Activated CD8-positive, alpha-beta T cell treated with anti-CD3 and anti-CD28 coated beads for 36 hours (primary cell): ENCODE measurements at regions of chr17 and their contacts with region 1.

Region 1: GRCh38 chr17:42843358-42843934 is 934 bp upstream of the AOC2 start:
- DNase-seq: no peak
- ATAC-seq: peak; percentile 29
- H3K4me3 Mint-ChIP-seq: no peak overlapping the region
- H3K27ac Mint-ChIP-seq: no peak overlapping the region
- H3K4me1 Mint-ChIP-seq: peaks cover 21% of the 10 kb centered on the region
- H3K27me3 Mint-ChIP-seq: no peaks in the 10 kb centered on the region
- CTCF ChIP-seq: no peak

Region 2: DNA sequence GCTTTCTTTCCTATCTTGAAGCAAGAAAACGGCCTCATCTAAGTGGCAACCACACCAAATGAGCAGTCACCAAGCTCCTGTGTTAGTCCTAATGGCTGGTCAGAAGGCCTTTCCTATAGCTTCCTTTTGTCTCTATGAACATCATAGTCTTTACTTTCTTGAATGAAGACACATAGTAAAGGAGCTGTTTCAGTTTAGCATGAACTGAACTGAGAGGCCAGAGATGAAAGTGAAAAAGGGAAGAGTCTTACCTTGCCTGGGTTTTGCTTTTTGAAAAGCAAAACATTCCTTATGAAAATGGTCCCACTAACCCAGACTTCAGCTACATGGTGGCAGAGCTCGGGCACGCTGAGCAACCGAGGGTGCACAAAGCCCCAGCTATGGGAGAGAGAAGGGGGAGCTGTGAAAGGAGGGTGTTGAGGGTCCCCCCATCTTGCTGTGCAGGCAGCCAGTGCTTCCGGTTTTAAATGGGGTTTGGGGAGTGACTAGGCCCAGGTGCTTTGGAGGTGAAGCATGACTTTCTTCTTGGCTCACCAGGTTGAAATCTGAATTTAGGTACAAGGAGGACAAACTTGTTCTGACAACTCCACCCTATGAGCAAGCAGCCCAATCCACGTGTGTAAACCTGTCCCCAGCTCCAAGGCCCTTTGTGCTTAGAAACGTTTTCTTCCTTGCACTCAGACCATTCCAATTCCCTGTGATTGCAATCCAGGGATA is 256.8 kb before region 1 on chr17:
- CTCF ChIA-PET with region 1: no interaction called
- POLR2A ChIA-PET with region 1: no interaction called
- intact Hi-C with region 1: no loop called
- DNase-seq: no peak
- ATAC-seq: no peak
- H3K4me3 Mint-ChIP-seq: no peak overlapping the region
- H3K27ac Mint-ChIP-seq: peak overlapping the region; percentile 72
- H3K4me1 Mint-ChIP-seq: peaks cover 2% of the 10 kb centered on the region
- H3K27me3 Mint-ChIP-seq: no peaks in the 10 kb centered on the region
- CTCF ChIP-seq: no peak

Region 3: GRCh38 chr17:42832974-42833766 is 10.3 kb before region 1 on chr17 and contains the start of gene PSME3:
- CTCF ChIA-PET with region 1: interaction called, 10 read pairs
- POLR2A ChIA-PET with region 1: interaction called, 27 read pairs
- intact Hi-C with region 1: no loop called
- DNase-seq: peak; percentile 92
- ATAC-seq: peak; percentile 89
- H3K4me3 Mint-ChIP-seq: peak within 1 kb of the TSS; percentile 94
- H3K27ac Mint-ChIP-seq: peak within 1 kb of the TSS; percentile 99
- H3K4me1 Mint-ChIP-seq: peaks cover 19% of the 10 kb centered on the region
- H3K27me3 Mint-ChIP-seq: no peaks in the 10 kb centered on the region
- CTCF ChIP-seq: no peak
- total RNA-seq, gene PSME3: 124 to 132 TPM

Region 4: GRCh38 chr17:42928714-42929496 is 85.5 kb after region 1 on chr17:
- CTCF ChIA-PET with region 1: interaction called, 12 read pairs
- POLR2A ChIA-PET with region 1: interaction called, 6 read pairs
- intact Hi-C with region 1: loop called (anchors 10 kb)
- DNase-seq: peak; percentile 78
- ATAC-seq: peak; percentile 89
- H3K4me3 Mint-ChIP-seq: no peak overlapping the region
- H3K27ac Mint-ChIP-seq: peak overlapping the region; percentile 18
- H3K4me1 Mint-ChIP-seq: peaks cover 12% of the 10 kb centered on the region
- H3K27me3 Mint-ChIP-seq: peaks cover 3% of the 10 kb centered on the region
- CTCF ChIP-seq: peak; percentile 71